ENCODE measurements at regions of chr20 and their contacts with region 1.

Region 1: DNA sequence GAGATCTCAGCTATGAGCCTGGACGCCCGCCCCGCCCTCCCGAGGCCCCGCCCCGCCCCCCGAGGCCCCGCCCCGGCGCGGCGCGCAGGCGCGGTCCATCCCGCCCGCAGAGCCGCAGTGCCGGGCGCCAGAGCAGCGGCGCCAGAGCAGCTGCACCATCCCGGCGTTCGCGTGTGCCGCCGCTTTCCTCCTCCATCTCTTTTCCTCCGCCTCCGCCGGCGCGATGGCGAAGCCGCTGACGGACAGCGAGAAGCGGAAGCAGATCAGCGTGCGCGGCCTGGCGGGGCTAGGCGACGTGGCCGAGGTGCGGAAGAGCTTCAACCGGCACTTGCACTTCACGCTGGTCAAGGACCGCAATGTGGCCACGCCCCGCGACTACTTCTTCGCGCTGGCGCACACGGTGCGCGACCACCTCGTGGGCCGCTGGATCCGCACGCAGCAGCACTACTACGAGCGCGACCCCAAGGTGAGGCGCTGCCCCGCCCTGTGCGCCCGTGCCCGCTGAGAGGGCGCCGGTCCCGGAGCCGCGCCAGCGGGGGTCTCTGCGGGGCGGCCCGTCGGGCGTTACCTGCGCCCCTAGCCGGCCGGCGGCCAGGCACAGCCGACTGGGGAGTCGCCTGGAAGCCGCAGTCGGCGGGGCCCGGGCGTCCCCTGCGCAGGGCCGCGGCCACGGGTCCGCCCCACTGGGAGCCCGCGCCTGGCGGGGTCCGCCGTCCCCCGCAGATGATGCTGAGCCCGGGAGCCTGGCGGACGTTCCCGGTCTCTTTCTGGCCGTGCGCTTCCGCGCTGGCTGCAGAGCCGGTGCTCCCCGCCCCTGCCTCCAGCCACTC is at the start of gene PYGB:
- DNase-seq: peak; percentile 78
- ATAC-seq: peak; percentile 87
- H3K4me3 ChIP-seq: peak within 1 kb of the TSS; percentile 81
- H3K27ac ChIP-seq: peak within 1 kb of the TSS; percentile 98
- H3K4me1 ChIP-seq: peaks cover 13% of the 10 kb centered on the region
- H3K27me3 ChIP-seq: no peaks in the 10 kb centered on the region
- CTCF ChIP-seq: no peak
- POLR2A ChIP-seq: peak; percentile 93
- RAD21 ChIP-seq: no peak; the same call in 1 of the 2 replicates
- total RNA-seq, gene PYGB: 72.4 and 81.4 TPM in 2 replicates

Region 2: GRCh38 chr20:25065625-25066338 is 182.4 kb before region 1 on chr20:
- CTCF ChIA-PET with region 1: no interaction called
- POLR2A ChIA-PET with region 1: no interaction called
- dilution Hi-C with region 1: no loop called
- in situ Hi-C with region 1: loop called (anchors 10 kb)
- intact Hi-C with region 1: loop called (anchors 5 kb)
- DNase-seq: peak; percentile 52
- ATAC-seq: peak; percentile 70
- H3K4me3 ChIP-seq: no peak overlapping the region
- H3K27ac ChIP-seq: no peak overlapping the region
- H3K4me1 ChIP-seq: no peaks in the 10 kb centered on the region
- H3K27me3 ChIP-seq: peaks cover 60% of the 10 kb centered on the region
- CTCF ChIP-seq: peak; percentile 72
- POLR2A ChIP-seq: no peak
- RAD21 ChIP-seq: peak; percentile 77

Region 3: DNA sequence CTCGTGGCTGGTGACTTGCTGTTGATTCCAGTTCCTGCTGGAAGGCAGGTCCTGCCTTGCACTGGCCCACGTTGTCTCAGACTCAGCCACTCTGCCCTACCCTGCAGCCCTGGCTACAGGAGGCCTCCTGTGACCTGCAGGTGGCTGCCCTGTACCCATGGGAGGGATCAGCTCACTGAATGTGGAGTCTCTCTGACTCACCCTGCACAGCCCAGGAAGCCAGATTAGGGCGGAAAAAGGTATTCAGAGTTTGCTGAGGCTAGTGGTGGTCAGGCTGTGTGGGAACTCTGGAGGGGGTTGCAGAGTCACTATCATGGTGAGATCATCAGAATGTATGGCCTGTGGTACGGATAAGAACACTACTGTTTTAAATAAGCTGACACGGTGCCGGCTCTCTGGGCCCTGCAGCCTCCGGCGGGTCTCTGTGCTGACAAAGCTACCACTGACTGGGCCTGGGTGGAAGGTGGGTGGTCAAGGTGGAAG is 25.0 kb before region 1 on chr20:
- CTCF ChIA-PET with region 1: interaction called, 6 read pairs
- POLR2A ChIA-PET with region 1: no interaction called
- dilution Hi-C with region 1: no loop called
- in situ Hi-C with region 1: no loop called
- intact Hi-C with region 1: loop called (anchors 2 kb)
- DNase-seq: peak; percentile 97
- ATAC-seq: peak; percentile 93
- H3K4me3 ChIP-seq: no peak overlapping the region
- H3K27ac ChIP-seq: peak overlapping the region; percentile 11; the same call in 1 of the 2 replicates
- H3K4me1 ChIP-seq: peaks cover 11% of the 10 kb centered on the region
- H3K27me3 ChIP-seq: no peaks in the 10 kb centered on the region
- CTCF ChIP-seq: peak; percentile 35; the same call in 1 of the 2 replicates
- POLR2A ChIP-seq: 0 out of 2 replicates have a peak, but pooled peaks have one; percentile 28
- RAD21 ChIP-seq: peak; percentile 43